ENCODE measurements at regions of chr18 and their contacts with region 1.

Region 1: GRCh38 chr18:56638271-56639093 is at the start of gene TXNL1:
- DNase-seq: peak; percentile 96
- ATAC-seq: peak; percentile 93
- H3K4me3 ChIP-seq: peak within 1 kb of the TSS; percentile 96 to 99 (median 99)
- H3K27ac ChIP-seq: peak within 1 kb of the TSS; percentile 97
- H3K4me1 ChIP-seq: peaks cover 45% of the 10 kb centered on the region
- H3K27me3 ChIP-seq: no peaks in the 10 kb centered on the region; a peak in 1 of 5 replicates
- CTCF ChIP-seq: no peak
- EP300 ChIP-seq: peak in 1 of 2 experiments; percentile 73; a peak in 1 of 4 replicates
- POLR2A ChIP-seq: peak; percentile 84 to 94
- RAD21 ChIP-seq: no peak
- total RNA-seq, gene TXNL1: 73.1 and 110 TPM in 2 replicates

Region 2: DNA sequence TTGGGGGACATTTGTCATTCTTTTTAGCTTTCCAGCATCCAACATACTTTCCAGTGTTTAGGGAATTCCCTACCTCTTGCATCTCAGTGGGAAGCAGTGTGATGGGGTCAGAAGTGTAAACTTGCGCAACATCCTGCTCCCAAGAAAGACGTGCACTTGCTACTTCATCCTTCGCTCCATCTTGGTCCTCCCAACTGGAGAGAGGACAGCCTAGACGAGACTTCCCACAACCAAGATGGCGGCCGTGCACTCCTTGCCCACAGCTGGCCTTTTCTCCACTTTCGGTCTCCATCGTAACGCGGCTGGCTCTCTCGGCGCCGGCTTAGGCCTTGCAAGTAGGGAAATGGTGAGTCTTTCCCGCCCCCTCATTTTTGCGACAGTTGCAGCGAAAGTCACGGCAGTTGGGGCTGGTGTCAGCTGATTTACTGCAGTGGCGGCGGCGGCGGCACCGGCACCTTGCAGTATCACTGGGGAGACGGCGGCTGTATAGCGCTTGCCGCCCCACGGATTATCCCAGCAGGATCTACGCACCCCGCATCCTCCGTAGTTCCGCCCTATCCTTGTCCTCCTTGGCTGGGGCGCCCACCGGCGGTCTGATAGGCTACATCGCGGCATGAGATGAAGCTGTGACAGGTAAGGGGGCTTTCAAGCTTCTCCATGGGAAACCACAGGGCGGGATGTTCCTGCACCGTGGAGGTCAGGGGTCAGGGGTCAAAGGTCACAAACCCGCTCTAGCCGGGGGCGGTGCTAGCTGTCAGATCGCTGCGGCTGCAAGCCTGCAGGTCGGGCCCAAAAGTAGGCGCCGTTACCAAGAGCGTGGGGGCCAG is 12.7 kb after region 1 on chr18 and contains the start of gene WDR7:
- CTCF ChIA-PET with region 1: no interaction called
- POLR2A ChIA-PET with region 1: interaction called, 32 read pairs
- in situ Hi-C with region 1: no loop called
- intact Hi-C with region 1: loop called (anchors 1 kb)
- DNase-seq: peak; percentile 94
- ATAC-seq: peak; percentile 98
- H3K4me3 ChIP-seq: peak within 1 kb of the TSS; percentile 79 to 87 (median 85)
- H3K27ac ChIP-seq: peak within 1 kb of the TSS; percentile 69
- H3K4me1 ChIP-seq: peaks cover 22% of the 10 kb centered on the region
- H3K27me3 ChIP-seq: no peaks in the 10 kb centered on the region; a peak in 1 of 5 replicates
- CTCF ChIP-seq: peak; percentile 53
- EP300 ChIP-seq: no peak
- POLR2A ChIP-seq: peak in 1 of 2 experiments; percentile 53
- RAD21 ChIP-seq: no peak
- total RNA-seq, gene WDR7: 7.8 and 11.1 TPM in 2 replicates